Thyroid gland (tissue), 4 donors: ENCODE measurements at regions of chr10 and their contacts with region 1.

Region 1: GRCh38 chr10:34637418-34637911 is 177.6 kb downstream of the PARD3 start:
- DNase-seq: peak; percentile 61 to 74
- H3K4me3 ChIP-seq: no peak overlapping the region
- H3K27ac ChIP-seq: no peak overlapping the region
- H3K4me1 ChIP-seq: peaks cover 7 to 22% of the 10 kb centered on the region in 2 donors
- H3K27me3 ChIP-seq: no peaks in the 10 kb centered on the region
- CTCF ChIP-seq: peak; percentile 80 to 96 (median 93)
- POLR2A ChIP-seq: no peak

Region 2: GRCh38 chr10:33193057-33193700 is 1444.3 kb before region 1 on chr10:
- intact Hi-C with region 1: loop called (anchors 10 kb)
- DNase-seq: peak; percentile 81 to 91
- H3K4me3 ChIP-seq: no peak overlapping the region
- H3K27ac ChIP-seq: no peak overlapping the region
- H3K4me1 ChIP-seq: peaks cover 0 to 17% of the 10 kb centered on the region in 2 donors
- H3K27me3 ChIP-seq: no peaks in the 10 kb centered on the region
- CTCF ChIP-seq: peak; percentile 35 to 85 (median 66)
- POLR2A ChIP-seq: no peak

Region 3: DNA sequence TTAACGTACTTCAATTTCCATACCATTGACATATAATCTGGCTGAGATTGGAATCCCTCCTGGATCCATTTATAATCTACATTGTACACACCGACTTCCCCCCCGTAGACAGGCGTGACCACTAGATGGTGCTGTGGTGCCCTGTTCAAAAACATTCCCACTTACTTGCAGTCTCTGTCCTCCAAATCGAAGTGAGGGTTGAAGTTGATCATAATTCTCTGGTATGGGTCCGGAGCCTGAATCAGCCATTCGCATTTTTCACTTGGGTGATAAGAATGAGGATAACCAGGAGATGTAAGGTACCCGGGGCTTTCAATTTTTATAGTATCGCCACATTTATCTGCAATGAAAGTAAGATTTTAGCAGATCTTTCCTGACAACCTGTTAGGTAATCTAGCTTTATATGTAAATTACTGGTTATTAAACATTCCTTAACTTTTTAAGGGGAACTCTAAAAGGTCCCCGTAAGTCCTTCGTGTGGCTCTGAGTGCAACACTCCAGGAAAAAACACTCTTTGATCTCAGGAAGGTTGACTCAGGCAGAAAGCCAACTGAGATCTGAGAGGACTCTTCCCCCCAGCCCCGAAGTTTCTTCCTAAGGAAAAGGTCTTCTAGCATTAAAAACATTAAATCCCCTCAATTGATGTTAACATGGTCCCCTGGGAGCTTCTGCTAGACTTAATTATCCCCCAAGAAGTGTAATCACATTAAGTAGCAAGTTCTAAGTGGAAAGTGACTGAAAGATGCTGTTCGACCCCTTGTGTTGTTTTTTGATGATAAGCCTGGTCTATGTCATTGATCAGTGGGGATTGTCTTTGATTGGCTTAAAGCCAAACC is 1306.7 kb before region 1 on chr10:
- intact Hi-C with region 1: loop called (anchors 5 kb)
- DNase-seq: peak; percentile 83 to 88
- H3K4me3 ChIP-seq: peak overlapping the region in 1 of 3 donors; percentile 14
- H3K27ac ChIP-seq: peak overlapping the region; percentile 44 to 95 (median 53)
- H3K4me1 ChIP-seq: peaks cover 17 to 29% of the 10 kb centered on the region in 2 donors
- H3K27me3 ChIP-seq: no peaks in the 10 kb centered on the region
- CTCF ChIP-seq: peak; percentile 72 to 88 (median 83)
- POLR2A ChIP-seq: no peak

Region 4: DNA sequence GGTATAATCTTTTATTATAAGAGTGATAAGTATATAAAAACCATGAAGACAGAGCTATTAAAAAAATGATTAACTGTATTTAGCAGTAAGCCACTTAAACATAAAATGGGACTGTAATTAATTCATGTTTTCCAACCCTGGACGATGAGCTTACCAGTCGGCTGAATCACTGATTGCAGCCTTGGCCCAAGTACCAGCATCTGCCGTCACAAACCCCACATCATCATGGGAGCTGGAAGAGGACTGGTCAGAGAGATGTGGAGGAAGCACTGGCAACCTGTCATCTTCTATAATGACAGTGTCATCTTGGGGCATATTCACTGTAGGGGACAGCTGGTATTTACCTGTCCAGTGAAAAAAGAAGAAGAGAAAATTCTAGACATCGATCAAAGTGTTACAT is 296.0 kb before region 1 on chr10:
- intact Hi-C with region 1: loop called (anchors 10 kb)
- DNase-seq: no peak
- H3K4me3 ChIP-seq: no peak overlapping the region
- H3K27ac ChIP-seq: no peak overlapping the region
- H3K4me1 ChIP-seq: no peaks in the 10 kb centered on the region
- H3K27me3 ChIP-seq: no peaks in the 10 kb centered on the region
- CTCF ChIP-seq: no peak
- POLR2A ChIP-seq: no peak